ENCODE measurements at regions of chr1 and their contacts with region 1.

Region 1: DNA sequence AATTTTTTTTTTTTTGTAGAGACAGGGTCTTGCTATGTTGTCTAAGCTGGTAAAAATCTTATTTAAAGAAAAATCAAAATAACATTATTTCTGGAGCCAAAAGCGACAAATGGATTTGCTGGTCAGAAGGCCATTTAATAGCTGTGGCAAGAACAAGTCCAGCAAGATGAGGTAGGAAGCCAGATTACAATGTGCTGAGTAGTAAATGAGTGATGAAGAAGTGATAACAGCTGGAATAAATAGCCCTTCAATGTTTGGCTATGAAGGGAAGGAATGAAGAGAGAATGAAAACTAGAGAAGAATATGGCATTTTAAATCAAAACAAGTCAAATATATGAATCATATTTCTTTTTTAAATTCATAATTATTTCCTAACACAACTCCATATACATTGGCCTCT is 34.5 kb downstream of the SYDE2 start:
- DNase-seq: no peak
- H3K4me3 ChIP-seq: no peak overlapping the region
- H3K27ac ChIP-seq: no peak overlapping the region
- H3K4me1 ChIP-seq: no peaks in the 10 kb centered on the region
- H3K27me3 ChIP-seq: no peaks in the 10 kb centered on the region
- CTCF ChIP-seq: no peak

Region 2: DNA sequence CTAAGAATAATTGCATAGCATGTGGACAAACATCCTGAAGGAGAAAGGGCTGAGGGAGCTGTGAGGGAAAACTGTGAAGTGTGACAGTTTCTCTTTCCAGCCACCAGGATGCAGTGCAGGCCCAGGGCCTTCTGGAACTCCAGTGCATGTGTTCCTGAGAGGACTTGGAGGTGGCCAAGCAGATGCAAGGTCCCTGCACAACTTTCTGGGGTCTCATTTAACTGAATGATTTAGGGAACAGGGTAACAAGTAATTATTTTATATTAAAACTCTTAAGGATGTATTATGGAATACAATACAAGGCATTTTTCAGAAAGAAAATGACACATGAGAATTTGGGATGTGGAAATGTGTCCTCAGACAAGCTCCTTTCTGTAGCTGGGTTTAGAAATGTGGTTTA is 56.9 kb before region 1 on chr1:
- intact Hi-C with region 1: loop called (anchors 10 kb)
- DNase-seq: peak in 1 of 2 donors; percentile 72
- H3K4me3 ChIP-seq: no peak overlapping the region
- H3K27ac ChIP-seq: no peak overlapping the region
- H3K4me1 ChIP-seq: no peaks in the 10 kb centered on the region
- H3K27me3 ChIP-seq: no peaks in the 10 kb centered on the region
- CTCF ChIP-seq: peak; percentile 68 to 88 (median 70)

Measured in ascending aorta (tissue), 2 donors.